Activated CD4-positive, alpha-beta memory T cell treated with anti-CD3 and anti-CD28 coated beads for 36 hours (primary cell): ENCODE measurements at regions of chr3 and their contacts with region 1.

Region 1: DNA sequence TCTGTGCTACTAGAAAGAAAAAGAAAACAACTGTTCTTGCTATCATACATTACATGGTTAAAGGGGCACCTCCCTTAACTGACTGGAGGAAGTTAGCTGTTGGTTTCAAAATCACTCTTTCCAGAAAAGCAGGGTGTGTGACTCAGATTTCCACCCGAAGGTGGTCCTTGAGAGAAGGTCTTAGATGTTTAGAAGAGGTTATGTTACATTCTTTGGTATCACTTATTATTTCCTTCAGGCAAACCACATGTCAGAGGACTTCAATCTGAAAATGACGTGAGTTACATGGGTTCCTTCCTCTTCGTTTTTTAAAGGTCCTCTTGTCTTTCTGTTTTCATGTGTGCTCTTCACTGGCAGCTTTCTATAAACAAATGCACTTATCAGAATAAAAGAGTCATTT is 307.9 kb upstream of the CBLB start:
- DNase-seq: peak; percentile 76
- H3K4me3 Mint-ChIP-seq: peak overlapping the region; percentile 51
- H3K27ac Mint-ChIP-seq: peak overlapping the region; percentile 87
- H3K4me1 Mint-ChIP-seq: peaks cover 58% of the 10 kb centered on the region
- H3K27me3 Mint-ChIP-seq: no peaks in the 10 kb centered on the region

Region 2: GRCh38 chr3:105752744-105753415 is 423.9 kb before region 1 on chr3:
- CTCF ChIA-PET with region 1: no interaction called
- POLR2A ChIA-PET with region 1: no interaction called
- intact Hi-C with region 1: loop called (anchors 2 kb)
- DNase-seq: peak; percentile 41
- H3K4me3 Mint-ChIP-seq: peak overlapping the region; percentile 21
- H3K27ac Mint-ChIP-seq: peak overlapping the region; percentile 87
- H3K4me1 Mint-ChIP-seq: peaks cover 75% of the 10 kb centered on the region
- H3K27me3 Mint-ChIP-seq: no peaks in the 10 kb centered on the region

Region 3: GRCh38 chr3:105868742-105869530 is 307.8 kb before region 1 on chr3 and contains the start of gene CBLB:
- CTCF ChIA-PET with region 1: no interaction called
- POLR2A ChIA-PET with region 1: interaction called, 6 read pairs
- intact Hi-C with region 1: loop called (anchors 1 kb)
- DNase-seq: peak; percentile 91
- H3K4me3 Mint-ChIP-seq: peak within 1 kb of the TSS; percentile 94
- H3K27ac Mint-ChIP-seq: peak within 1 kb of the TSS; percentile 94
- H3K4me1 Mint-ChIP-seq: peaks cover 38% of the 10 kb centered on the region
- H3K27me3 Mint-ChIP-seq: no peaks in the 10 kb centered on the region
- total RNA-seq, gene CBLB: 86.1 to 88.2 TPM

Region 4: DNA sequence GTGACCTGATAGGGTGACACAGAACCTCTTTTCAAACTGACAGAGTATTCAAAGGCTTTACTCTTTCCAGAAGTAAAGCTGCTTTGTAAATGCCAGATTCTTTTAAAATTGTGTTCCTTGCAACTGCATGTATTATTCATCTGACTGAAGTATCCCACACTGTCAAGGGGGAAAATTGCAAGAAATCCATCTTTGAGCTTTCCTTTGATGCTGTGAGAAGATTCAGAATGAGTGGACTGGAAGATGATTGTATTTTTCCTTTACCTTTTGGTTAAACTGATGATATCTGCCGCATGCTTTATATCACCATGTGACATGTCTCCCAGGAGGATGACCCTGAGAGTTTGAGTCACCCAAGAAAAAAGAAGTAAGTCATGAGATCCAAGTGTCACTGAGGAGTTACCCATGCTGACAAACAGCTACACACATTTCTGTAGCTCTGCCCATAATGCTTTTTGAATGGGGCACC is 57.1 kb before region 1 on chr3:
- CTCF ChIA-PET with region 1: no interaction called
- POLR2A ChIA-PET with region 1: interaction called, 4 read pairs
- intact Hi-C with region 1: loop called (anchors 1 kb)
- DNase-seq: peak; percentile 42
- H3K4me3 Mint-ChIP-seq: no peak overlapping the region
- H3K27ac Mint-ChIP-seq: peak overlapping the region; percentile 50
- H3K4me1 Mint-ChIP-seq: peaks cover 21% of the 10 kb centered on the region
- H3K27me3 Mint-ChIP-seq: no peaks in the 10 kb centered on the region

Region 5: GRCh38 chr3:106215047-106215446 is 38.3 kb after region 1 on chr3:
- CTCF ChIA-PET with region 1: no interaction called
- POLR2A ChIA-PET with region 1: interaction called, 3 read pairs
- intact Hi-C with region 1: loop called (anchors 2 kb)
- DNase-seq: peak; percentile 64
- H3K4me3 Mint-ChIP-seq: no peak overlapping the region
- H3K27ac Mint-ChIP-seq: peak overlapping the region; percentile 68
- H3K4me1 Mint-ChIP-seq: peaks cover 61% of the 10 kb centered on the region
- H3K27me3 Mint-ChIP-seq: no peaks in the 10 kb centered on the region

Region 6: DNA sequence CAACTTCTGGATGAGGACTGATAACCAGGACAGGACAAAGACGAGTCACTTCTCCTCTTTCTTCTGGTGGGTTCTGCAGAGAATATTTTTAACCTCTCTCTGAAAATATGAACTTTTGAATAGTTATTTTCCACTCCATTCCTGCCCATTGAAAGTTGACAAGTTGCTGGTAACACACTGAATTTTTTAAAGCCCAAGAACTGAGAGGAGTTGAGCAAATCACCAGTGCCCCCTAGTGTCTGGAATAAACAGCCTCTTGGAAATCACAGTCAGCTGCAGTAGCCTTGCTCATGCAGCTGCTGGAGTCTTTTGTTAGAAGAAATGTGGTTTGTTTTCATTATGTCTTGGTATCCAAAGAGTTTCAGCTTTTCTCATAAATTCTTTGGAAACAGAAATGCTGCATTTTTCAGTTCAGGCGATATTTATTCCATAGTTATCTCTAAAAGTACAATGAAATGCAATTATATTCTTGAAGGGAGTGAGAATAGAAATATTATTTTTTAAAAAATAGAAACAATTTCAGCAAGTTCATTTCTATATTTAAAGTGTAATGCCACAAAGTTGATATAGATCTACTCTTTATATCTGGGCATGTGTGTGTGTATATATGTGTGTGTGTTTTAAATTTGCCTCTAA is 433.1 kb after region 1 on chr3:
- CTCF ChIA-PET with region 1: no interaction called
- POLR2A ChIA-PET with region 1: no interaction called
- intact Hi-C with region 1: loop called (anchors 10 kb)
- DNase-seq: peak; percentile 76
- H3K4me3 Mint-ChIP-seq: no peak overlapping the region
- H3K27ac Mint-ChIP-seq: peak overlapping the region; percentile 67
- H3K4me1 Mint-ChIP-seq: peaks cover 23% of the 10 kb centered on the region
- H3K27me3 Mint-ChIP-seq: no peaks in the 10 kb centered on the region